Activated T-helper 2 cell treated with anti-CD3 and anti-CD28 coated beads, Interferon-gamma antibody, Interleukin-2, Interleukin-4, amounts not matched to agents 10 μg/mL and 5 μg/mL and 100 μg/mL, durations not matched to agents 14 hours and 24 hours and 36 hours (primary cell): ENCODE measurements at regions of chr2 and their contacts with region 1.

Region 1: GRCh38 chr2:39948016-39948719 is 169.1 kb upstream of the THUMPD2 start:
- DNase-seq: no peak
- H3K4me3 Mint-ChIP-seq: peak overlapping the region; percentile 5
- H3K27ac Mint-ChIP-seq: peak overlapping the region; percentile 93
- H3K4me1 Mint-ChIP-seq: peaks cover 54% of the 10 kb centered on the region
- H3K27me3 Mint-ChIP-seq: no peaks in the 10 kb centered on the region

Region 2: DNA sequence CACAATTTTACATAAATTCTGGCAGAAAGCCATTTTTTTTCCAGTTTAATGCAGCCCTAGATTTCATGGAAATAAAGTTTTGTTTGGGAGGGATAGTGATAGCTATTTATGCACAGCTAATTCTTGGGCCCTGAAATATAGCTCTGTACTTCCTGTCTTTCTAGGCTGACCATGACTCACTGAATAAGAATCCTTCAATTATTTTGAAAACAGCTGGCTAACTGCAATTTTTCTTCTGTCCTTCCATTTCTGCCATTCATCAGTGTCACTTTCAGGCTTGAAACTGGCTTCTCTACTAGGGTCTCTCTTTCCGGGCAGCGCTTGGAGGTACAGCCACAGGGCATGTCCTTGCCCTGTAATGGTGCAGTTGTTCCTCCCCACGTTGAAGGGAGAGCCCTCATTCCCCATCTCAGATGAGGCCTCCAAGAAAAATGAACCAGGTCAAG is 379.6 kb before region 1 on chr2:
- intact Hi-C with region 1: no loop called
- DNase-seq: no peak
- H3K4me3 Mint-ChIP-seq: no peak overlapping the region
- H3K27ac Mint-ChIP-seq: no peak overlapping the region
- H3K4me1 Mint-ChIP-seq: no peaks in the 10 kb centered on the region
- H3K27me3 Mint-ChIP-seq: peaks cover 1% of the 10 kb centered on the region

Region 3: DNA sequence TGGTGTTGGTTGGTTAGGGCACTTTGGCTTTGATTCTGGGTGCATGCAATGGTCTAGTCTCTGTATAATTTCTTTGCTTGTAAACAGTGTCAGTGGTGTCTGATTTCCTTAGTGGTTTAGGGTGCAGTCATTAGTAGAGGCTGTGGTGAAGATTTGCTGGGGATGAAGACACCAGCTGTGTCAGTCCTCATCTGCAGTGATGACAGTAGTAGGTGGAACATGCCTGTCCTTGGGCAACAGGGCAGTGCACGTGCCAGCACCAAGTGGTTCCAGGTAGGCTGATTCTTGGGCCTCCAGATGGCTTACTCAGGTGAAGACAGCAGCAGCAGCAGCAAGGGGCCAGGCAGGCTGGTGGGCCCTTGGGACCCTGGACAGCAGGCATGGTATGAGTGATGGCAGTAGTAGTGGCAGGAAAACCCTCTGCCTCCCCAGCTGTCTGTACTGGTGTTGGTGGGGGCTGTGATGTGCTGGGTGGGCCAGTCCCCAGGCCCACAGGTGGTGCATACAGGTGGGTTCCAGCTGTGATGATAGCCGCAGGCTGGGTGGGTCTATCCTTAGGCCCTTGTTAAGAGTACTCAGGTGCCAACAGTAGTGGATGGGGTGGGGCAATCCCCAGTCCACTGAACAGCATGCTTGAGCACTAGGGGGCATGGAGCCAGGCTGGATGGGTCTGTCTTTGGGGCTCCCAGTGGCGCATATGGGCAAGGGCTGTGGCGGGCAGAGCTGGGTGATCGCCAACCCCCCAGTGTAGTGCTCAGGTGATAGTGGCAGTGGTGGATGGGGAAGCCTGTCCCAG is 28.5 kb before region 1 on chr2:
- intact Hi-C with region 1: loop called (anchors 1 kb)
- DNase-seq: peak; percentile 35
- H3K4me3 Mint-ChIP-seq: peak overlapping the region; percentile 81
- H3K27ac Mint-ChIP-seq: peak overlapping the region; percentile 91
- H3K4me1 Mint-ChIP-seq: peaks cover 72% of the 10 kb centered on the region
- H3K27me3 Mint-ChIP-seq: no peaks in the 10 kb centered on the region

Region 4: GRCh38 chr2:39996653-39997080 is 48.5 kb after region 1 on chr2:
- intact Hi-C with region 1: loop called (anchors 1 kb)
- DNase-seq: no peak
- H3K4me3 Mint-ChIP-seq: no peak overlapping the region
- H3K27ac Mint-ChIP-seq: peak overlapping the region; percentile 87
- H3K4me1 Mint-ChIP-seq: peaks cover 47% of the 10 kb centered on the region
- H3K27me3 Mint-ChIP-seq: no peaks in the 10 kb centered on the region

Region 5: GRCh38 chr2:40127890-40128557 is 179.9 kb after region 1 on chr2:
- intact Hi-C with region 1: loop called (anchors 1 kb)
- DNase-seq: no peak
- H3K4me3 Mint-ChIP-seq: no peak overlapping the region
- H3K27ac Mint-ChIP-seq: no peak overlapping the region
- H3K4me1 Mint-ChIP-seq: peaks cover 19% of the 10 kb centered on the region
- H3K27me3 Mint-ChIP-seq: no peaks in the 10 kb centered on the region

Region 6: DNA sequence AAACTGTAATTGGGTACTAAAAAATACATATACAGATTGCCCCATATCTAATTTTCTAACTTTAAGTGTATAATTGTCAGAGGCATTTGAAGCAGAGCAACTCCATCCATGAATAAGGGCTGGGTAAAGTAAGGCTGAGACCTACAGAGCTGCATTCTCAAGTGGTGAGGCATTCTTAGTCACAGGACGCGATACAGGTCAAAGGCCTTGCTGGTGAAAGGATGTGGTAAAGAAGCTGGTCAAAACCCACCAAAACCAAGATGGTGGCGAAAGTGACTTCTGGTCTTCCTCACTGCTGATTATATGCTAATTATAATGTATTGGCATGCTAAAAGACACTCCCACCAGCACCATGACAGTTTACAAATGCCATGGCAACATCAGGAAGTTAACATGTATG is 453.7 kb after region 1 on chr2:
- intact Hi-C with region 1: loop called (anchors 1 kb)
- DNase-seq: no peak
- H3K4me3 Mint-ChIP-seq: no peak overlapping the region
- H3K27ac Mint-ChIP-seq: peak overlapping the region; percentile 43
- H3K4me1 Mint-ChIP-seq: peaks cover 26% of the 10 kb centered on the region
- H3K27me3 Mint-ChIP-seq: no peaks in the 10 kb centered on the region